ENCODE measurements at regions of chr1 and their contacts with region 1.

Region 1: GRCh38 chr1:176177764-176178163 is 29.3 kb downstream of the COP1 start:
- DNase-seq: no peak
- H3K4me3 Mint-ChIP-seq: peak overlapping the region; percentile 47
- H3K27ac Mint-ChIP-seq: peak overlapping the region; percentile 85
- H3K4me1 Mint-ChIP-seq: peaks cover 19% of the 10 kb centered on the region
- H3K27me3 Mint-ChIP-seq: no peaks in the 10 kb centered on the region

Region 2: GRCh38 chr1:176159993-176160392 is 17.8 kb before region 1 on chr1:
- intact Hi-C with region 1: loop called (anchors 1 kb)
- DNase-seq: no peak
- H3K4me3 Mint-ChIP-seq: peak overlapping the region; percentile 31
- H3K27ac Mint-ChIP-seq: peak overlapping the region; percentile 90
- H3K4me1 Mint-ChIP-seq: peaks cover 36% of the 10 kb centered on the region
- H3K27me3 Mint-ChIP-seq: no peaks in the 10 kb centered on the region

Region 3: GRCh38 chr1:176193023-176193422 is 15.3 kb after region 1 on chr1:
- intact Hi-C with region 1: loop called (anchors 1 kb)
- DNase-seq: no peak
- H3K4me3 Mint-ChIP-seq: no peak overlapping the region
- H3K27ac Mint-ChIP-seq: no peak overlapping the region
- H3K4me1 Mint-ChIP-seq: peaks cover 53% of the 10 kb centered on the region
- H3K27me3 Mint-ChIP-seq: no peaks in the 10 kb centered on the region